ENCODE measurements at regions of chr1 and their contacts with region 1.

Region 1: DNA sequence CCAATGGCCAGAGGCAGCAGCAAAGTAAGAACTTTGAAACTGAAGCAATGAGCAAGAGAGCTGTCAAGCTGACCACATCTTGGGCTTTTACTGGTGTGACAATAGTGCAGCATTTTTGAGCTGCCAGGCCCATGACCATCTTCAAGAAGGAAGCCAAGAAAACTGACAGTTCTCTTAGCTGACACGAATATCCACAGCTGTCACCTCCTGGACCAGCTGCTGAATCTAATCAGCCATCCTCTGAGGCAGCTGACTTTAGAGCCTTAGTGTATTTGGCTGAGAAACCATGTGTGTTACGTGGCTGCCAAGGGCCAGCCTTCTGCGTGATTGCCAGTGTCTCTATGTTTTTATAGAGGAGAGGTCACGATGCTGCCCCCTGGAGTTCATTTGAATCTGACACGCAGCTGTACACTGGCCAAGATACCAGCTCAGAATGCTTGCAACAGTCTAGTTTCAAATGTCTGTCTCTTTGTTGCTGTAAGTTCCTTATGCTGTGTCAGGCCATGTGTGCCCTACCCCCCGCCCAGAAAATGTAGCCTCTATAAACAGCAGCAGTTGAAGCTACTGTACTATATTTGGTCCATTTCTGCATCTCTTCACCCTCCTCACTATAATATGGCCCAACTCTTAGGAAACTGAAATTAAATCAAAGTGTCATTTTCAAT is 39.7 kb downstream of the PALMD start:
- DNase-seq: peak; percentile 92
- H3K4me3 Mint-ChIP-seq: no peak overlapping the region
- H3K27ac Mint-ChIP-seq: no peak overlapping the region
- H3K4me1 Mint-ChIP-seq: peaks cover 24% of the 10 kb centered on the region
- H3K27me3 Mint-ChIP-seq: no peaks in the 10 kb centered on the region
- CTCF ChIP-seq: peak; percentile 54

Region 2: DNA sequence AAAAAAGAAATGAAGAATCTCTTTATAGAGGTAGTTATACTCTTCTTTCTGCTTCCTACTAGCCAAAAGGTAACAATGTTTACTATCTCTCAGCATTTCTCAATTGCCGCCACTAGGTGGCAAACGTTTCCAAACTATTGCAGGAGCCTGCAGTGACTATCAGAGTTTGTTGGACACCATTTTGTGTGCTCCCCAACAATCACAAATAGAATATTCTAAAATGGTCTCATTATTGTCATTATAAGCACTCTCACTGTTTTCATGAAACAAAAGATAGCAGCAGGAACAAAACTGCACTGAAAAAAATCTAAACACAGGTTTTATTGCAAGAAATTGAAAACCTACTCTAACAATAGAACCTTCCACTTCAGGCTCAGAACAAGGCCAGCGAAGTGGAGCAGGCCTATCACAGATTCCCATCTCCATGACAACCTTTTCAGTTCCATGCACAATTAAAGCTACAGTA is 505.3 kb before region 1 on chr1:
- CTCF ChIA-PET with region 1: interaction called, 12 read pairs
- POLR2A ChIA-PET with region 1: no interaction called
- intact Hi-C with region 1: loop called (anchors 1 kb)
- DNase-seq: peak; percentile 79
- H3K4me3 Mint-ChIP-seq: no peak overlapping the region
- H3K27ac Mint-ChIP-seq: no peak overlapping the region
- H3K4me1 Mint-ChIP-seq: no peaks in the 10 kb centered on the region
- H3K27me3 Mint-ChIP-seq: no peaks in the 10 kb centered on the region
- CTCF ChIP-seq: peak; percentile 70

Region 3: DNA sequence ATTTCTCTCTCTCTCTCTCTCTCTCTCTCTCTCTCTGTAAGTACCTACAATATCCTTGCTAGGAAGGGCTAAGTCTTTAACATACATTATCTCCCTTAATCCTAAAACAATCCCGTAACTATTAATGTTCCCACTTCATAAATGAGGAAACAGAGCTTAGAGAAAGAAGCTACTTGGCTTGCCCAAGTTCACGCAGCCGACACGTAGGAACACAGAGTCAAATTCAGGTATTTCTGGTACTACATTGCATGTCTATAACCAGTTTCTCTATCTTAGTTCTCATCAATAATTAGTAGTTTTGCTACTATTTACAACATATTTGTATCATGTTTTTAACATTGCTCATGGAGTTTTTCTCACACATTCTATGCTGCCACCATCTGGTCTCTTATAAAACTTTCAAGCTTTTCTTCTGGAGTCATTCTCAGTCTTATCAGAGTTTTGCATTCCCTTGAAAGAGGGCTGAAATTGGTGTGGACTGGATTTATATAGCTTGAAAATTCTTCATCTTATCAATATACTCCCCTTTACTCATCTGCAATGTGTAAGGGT is 158.6 kb before region 1 on chr1:
- CTCF ChIA-PET with region 1: interaction called, 16 read pairs
- POLR2A ChIA-PET with region 1: interaction called, 3 read pairs
- intact Hi-C with region 1: loop called (anchors 10 kb)
- DNase-seq: peak; percentile 21
- H3K4me3 Mint-ChIP-seq: no peak overlapping the region
- H3K27ac Mint-ChIP-seq: no peak overlapping the region
- H3K4me1 Mint-ChIP-seq: no peaks in the 10 kb centered on the region
- H3K27me3 Mint-ChIP-seq: no peaks in the 10 kb centered on the region
- CTCF ChIP-seq: peak; percentile 30

Region 4: DNA sequence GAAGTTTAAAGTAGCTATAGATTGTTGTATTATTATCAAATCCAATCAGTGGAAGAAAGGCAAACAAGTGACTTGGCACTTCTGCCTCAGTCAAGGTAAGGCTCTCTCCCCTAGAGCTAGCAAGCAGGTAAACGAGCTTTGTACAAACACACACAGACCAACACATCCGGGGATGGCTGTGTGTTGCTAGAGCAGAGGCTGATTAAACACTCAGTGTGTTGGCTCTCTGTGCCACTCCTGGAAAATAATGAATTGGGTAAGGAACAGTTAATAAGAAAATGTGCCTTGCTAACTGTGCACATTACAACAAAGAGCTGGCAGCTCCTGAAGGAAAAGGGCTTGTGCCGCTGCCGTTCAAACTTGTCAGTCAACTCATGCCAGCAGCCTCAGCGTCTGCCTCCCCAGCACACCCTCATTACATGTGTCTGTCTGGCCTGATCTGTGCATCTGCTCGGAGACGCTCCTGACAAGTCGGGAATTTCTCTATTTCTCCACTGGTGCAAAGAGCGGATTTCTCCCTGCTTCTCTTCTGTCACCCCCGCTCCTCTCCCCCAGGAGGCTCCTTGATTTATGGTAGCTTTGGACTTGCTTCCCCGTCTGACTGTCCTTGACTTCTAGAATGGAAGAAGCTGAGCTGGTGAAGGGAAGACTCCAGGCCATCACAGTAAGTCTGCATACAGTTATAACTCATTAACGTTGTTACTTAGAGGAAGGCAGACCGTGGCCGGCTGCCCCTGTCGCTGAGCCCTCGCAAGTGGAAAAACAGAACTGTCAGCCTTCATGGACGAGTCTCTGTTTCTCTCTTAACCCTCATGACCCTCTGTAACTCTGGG is 39.7 kb before region 1 on chr1 and contains the start of gene PALMD:
- CTCF ChIA-PET with region 1: interaction called, 20 read pairs
- POLR2A ChIA-PET with region 1: interaction called, 27 read pairs
- intact Hi-C with region 1: no loop called
- DNase-seq: peak; percentile 71
- H3K4me3 Mint-ChIP-seq: peak within 1 kb of the TSS; percentile 56
- H3K27ac Mint-ChIP-seq: peak within 1 kb of the TSS; percentile 46
- H3K4me1 Mint-ChIP-seq: peaks cover 34% of the 10 kb centered on the region
- H3K27me3 Mint-ChIP-seq: no peaks in the 10 kb centered on the region
- CTCF ChIP-seq: no peak
- total RNA-seq, gene PALMD: 0.12 and 0.33 TPM in 2 replicates

Region 5: DNA sequence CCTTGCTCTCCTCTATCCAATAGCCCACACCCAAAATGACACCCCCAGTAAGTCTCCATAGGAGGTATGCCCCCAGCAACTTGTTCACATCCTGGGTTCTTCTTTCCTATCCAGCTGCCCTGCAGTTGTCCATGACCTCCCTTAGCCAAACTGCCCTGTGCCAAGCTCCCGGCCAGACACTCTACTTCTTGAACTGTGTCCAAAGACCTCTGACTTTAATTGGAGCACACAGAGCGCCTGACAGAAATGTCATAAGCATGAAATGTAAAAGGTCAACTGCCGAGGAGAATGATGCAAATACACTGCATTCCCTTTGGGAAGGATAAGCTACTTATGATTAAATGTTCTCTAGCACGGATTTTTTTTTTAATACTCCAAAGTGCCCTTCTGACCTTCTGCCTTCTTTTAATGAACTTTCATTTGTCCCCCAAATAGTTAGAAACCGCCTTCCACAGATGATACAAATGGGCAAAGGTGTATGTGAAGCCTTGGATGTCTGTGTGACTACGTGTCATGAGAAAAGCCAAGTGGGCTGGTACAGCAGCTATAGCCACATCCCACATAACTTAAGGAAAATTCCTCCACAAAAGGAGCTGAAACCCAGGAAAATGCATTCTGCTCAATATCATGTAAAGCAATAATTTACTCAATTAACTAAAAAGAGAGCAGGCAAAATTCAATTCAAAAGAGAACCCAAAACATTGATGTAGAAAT is 13.0 kb before region 1 on chr1:
- CTCF ChIA-PET with region 1: interaction called, 8 read pairs
- POLR2A ChIA-PET with region 1: interaction called, 12 read pairs
- intact Hi-C with region 1: no loop called
- DNase-seq: peak; percentile 21
- H3K4me3 Mint-ChIP-seq: no peak overlapping the region
- H3K27ac Mint-ChIP-seq: no peak overlapping the region
- H3K4me1 Mint-ChIP-seq: no peaks in the 10 kb centered on the region
- H3K27me3 Mint-ChIP-seq: no peaks in the 10 kb centered on the region
- CTCF ChIP-seq: no peak

Measured in MCF 10A (cell line).